Tibial artery (tissue), 4 donors: ENCODE measurements at regions of chr9 and their contacts with region 1.

Region 1: DNA sequence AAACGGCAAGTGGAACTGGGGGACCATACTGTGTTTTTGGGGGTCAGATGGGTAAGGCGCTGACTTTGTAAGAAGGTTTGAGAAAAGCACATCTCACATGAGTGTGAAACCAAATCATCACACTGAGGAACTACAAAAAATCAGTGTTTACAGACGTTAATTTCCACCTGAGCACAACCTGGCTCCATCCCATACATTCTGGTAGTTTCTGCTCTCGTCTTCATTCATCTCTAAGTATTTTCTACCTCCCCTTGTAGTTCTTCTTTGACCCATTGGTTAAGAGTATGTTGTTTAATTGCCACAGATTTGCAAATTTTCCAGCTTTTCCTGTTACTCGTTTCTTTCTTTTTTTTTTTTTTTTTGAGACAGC is 8.9 kb upstream of the DPP7 start:
- DNase-seq: no peak
- H3K4me3 ChIP-seq: no peak overlapping the region
- H3K27ac ChIP-seq: no peak overlapping the region
- H3K4me1 ChIP-seq: peaks cover 0 to 12% (median 7%) of the 10 kb centered on the region in 4 donors
- H3K27me3 ChIP-seq: peaks cover 0 to 11% of the 10 kb centered on the region in 2 donors
- CTCF ChIP-seq: no peak

Region 2: GRCh38 chr9:136829981-136830885 is 293.2 kb before region 1 on chr9:
- intact Hi-C with region 1: no loop called
- DNase-seq: peak in 1 of 2 donors; percentile 68
- H3K4me3 ChIP-seq: no peak overlapping the region
- H3K27ac ChIP-seq: no peak overlapping the region
- H3K4me1 ChIP-seq: no peaks in the 10 kb centered on the region
- H3K27me3 ChIP-seq: no peaks in the 10 kb centered on the region
- CTCF ChIP-seq: no peak

Region 3: GRCh38 chr9:137055385-137056364 is 67.8 kb before region 1 on chr9:
- intact Hi-C with region 1: no loop called
- DNase-seq: peak in 1 of 2 donors; percentile 34
- H3K4me3 ChIP-seq: no peak overlapping the region
- H3K27ac ChIP-seq: no peak overlapping the region
- H3K4me1 ChIP-seq: peaks cover 0 to 36% (median 25%) of the 10 kb centered on the region in 4 donors
- H3K27me3 ChIP-seq: peaks cover 6 to 62% of the 10 kb centered on the region in 2 donors
- CTCF ChIP-seq: no peak

Region 4: DNA sequence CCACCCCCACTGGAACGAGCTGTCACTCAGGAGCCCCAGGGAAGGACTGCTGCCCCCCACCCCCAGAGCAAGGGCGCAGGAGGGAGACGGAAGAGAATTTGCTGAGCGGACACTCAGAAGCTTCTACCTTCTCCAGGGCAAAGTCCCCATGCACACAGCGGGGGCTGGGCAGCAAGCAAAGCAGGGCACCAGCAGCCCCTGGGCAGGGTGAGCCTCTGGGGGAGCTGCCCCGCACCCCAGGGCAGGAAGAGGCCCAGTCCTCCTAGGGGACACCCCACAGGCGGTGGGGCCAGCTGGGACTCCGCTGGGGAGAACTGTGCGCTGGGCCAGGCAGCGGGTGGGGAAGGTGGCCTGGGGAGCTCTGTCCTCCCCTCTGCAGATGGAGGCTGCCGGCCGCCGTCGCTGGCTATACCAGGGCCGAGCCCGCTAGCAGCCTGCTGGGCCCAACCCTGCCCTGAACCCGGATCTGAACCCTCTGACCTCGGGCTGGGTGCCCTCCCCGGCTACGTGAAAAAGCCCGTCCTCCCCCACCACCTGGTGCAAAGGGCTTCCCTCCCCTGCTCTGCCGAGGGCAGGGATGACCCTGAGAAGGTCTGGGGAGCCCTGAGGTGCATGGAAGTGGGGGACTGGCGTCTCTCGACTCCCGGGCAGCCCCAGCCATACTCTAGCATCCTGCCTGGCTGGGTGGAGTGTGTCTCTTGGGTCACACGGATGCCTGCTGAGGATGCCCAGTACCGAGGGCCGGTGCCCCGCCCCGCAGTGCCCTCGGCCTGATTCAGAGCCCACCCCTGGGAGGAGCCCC is 106.7 kb after region 1 on chr9:
- intact Hi-C with region 1: loop called (anchors 2 kb)
- DNase-seq: no peak
- H3K4me3 ChIP-seq: no peak overlapping the region
- H3K27ac ChIP-seq: no peak overlapping the region
- H3K4me1 ChIP-seq: peaks cover 0 to 26% (median 3%) of the 10 kb centered on the region in 4 donors
- H3K27me3 ChIP-seq: peaks cover 0 to 79% of the 10 kb centered on the region in 2 donors
- CTCF ChIP-seq: no peak